Naive thymus-derived CD4-positive, alpha-beta T cell (primary cell): ENCODE measurements at regions of chr12 and their contacts with region 1.

Region 1: DNA sequence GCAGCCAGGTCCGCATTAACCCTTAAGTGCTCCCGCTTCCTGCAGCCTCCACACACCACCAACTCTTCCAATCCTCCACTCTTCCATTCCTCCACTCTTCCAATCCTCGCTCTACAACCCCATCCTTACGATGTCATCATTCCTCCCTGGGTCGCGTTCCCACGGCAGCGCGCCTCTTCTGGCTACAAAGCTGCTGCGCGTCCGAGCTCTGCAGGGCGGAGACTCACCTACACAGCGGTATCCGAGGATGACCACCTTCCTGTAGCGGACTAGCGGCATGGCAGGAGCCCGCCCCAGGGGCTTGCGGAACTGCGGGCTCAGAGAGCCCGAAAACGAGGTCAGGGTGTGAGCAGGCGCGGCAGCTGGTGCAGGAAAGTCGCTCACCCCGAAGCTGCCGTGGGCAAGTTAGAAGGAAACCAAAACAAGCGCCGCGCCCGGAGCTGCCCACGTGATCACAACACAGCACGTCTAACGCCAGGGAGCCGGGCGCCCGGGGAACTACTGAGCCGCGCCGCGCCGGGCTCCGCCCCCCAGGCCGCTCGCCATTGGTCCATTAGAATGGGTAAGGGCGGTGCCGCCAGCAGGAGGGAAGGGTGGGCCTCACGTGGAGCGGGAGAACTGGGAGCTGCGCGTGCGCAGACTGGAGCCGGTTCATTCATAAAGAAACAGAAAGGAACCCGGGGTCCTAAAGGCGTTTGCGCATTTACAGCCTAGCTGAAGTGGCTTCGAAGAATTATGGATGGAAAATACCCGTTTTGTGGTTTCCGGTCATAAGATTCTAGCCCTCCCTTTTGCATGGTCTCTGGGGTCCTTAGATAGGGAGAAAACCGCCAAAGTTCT is at the start of gene RHEBL1:
- DNase-seq: peak; percentile 93 to 99 (median 96)
- ATAC-seq: peak; percentile 100
- H3K4me3 ChIP-seq: peak within 1 kb of the TSS; percentile 99
- H3K4me3 Mint-ChIP-seq: peak within 1 kb of the TSS; percentile 86 to 99 (median 96)
- H3K27ac ChIP-seq: peak within 1 kb of the TSS; percentile 74
- H3K27ac Mint-ChIP-seq: peak within 1 kb of the TSS; percentile 77 to 92 (median 86)
- H3K4me1 ChIP-seq: peaks cover 5 to 13% of the 10 kb centered on the region in 2 donors
- H3K4me1 Mint-ChIP-seq: peaks cover 14 to 31% (median 18%) of the 10 kb centered on the region in 7 donors
- H3K27me3 ChIP-seq: no peaks in the 10 kb centered on the region
- H3K27me3 Mint-ChIP-seq: no peaks in the 10 kb centered on the region
- total RNA-seq, gene RHEBL1: 1.8 to 9.4 (median 3.3) TPM

Region 2: DNA sequence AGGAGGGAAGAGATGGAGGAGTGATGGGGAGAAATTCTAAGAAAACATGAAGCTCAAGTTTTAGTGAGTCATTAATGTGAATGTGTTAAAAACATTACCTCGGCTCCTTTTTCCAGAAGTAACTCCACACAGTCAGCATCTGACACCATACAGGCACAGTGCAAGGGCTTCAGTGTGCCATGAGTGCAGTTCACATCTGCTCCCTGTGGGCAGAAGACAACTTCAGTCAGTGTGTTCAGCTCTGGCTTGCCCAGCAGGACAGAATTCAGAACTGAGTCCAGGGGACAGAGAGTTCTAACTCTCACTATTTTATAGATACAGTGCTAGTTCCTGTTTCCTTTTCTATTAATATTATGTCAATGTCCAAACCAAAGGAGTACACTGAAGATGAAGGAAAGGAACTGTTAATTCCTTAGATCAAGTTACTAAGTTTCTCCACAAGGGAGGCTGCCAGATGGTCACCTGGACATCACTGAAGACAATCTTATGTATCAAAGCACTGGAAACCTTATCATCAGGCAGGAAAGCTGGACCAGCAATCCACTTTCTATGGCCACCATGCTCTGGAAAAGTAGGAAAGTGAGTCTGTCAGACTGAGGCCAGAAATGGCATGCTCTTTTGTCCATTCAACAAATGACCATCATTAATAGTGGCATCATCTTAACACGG is 918.5 kb before region 1 on chr12:
- CTCF ChIA-PET with region 1: no interaction called
- POLR2A ChIA-PET with region 1: no interaction called
- intact Hi-C with region 1: no loop called
- DNase-seq: no peak
- ATAC-seq: no peak
- H3K4me3 ChIP-seq: no peak overlapping the region
- H3K4me3 Mint-ChIP-seq: no peak overlapping the region
- H3K27ac ChIP-seq: peak overlapping the region; percentile 27
- H3K27ac Mint-ChIP-seq: peak overlapping the region in 3 of 9 donors; percentile 14 to 82 (median 28)
- H3K4me1 ChIP-seq: peaks cover 0 to 3% of the 10 kb centered on the region in 2 donors
- H3K4me1 Mint-ChIP-seq: peaks cover 16 to 26% (median 19%) of the 10 kb centered on the region in 7 donors
- H3K27me3 ChIP-seq: no peaks in the 10 kb centered on the region
- H3K27me3 Mint-ChIP-seq: no peaks in the 10 kb centered on the region

Region 3: GRCh38 chr12:48716493-48717251 is 353.1 kb before region 1 on chr12 and contains the start of gene CCNT1:
- CTCF ChIA-PET with region 1: no interaction called
- POLR2A ChIA-PET with region 1: no interaction called
- intact Hi-C with region 1: loop called in 1 of 2 experiments (anchors 5 kb)
- DNase-seq: peak; percentile 90 to 100 (median 99)
- ATAC-seq: peak; percentile 93
- H3K4me3 ChIP-seq: peak within 1 kb of the TSS; percentile 88
- H3K4me3 Mint-ChIP-seq: peak within 1 kb of the TSS; percentile 89 to 98 (median 94)
- H3K27ac ChIP-seq: peak within 1 kb of the TSS; percentile 95
- H3K27ac Mint-ChIP-seq: peak within 1 kb of the TSS; percentile 95 to 99 (median 98)
- H3K4me1 ChIP-seq: peaks cover 14 to 24% of the 10 kb centered on the region in 2 donors
- H3K4me1 Mint-ChIP-seq: peaks cover 21 to 50% (median 37%) of the 10 kb centered on the region in 7 donors
- H3K27me3 ChIP-seq: no peaks in the 10 kb centered on the region
- H3K27me3 Mint-ChIP-seq: peaks cover 0 to 4% (median 0%) of the 10 kb centered on the region in 5 donors
- total RNA-seq, gene CCNT1: 62.5 to 127 (median 76.6) TPM

Region 4: GRCh38 chr12:48977315-48978281 is 92.1 kb before region 1 on chr12:
- CTCF ChIA-PET with region 1: no interaction called
- POLR2A ChIA-PET with region 1: no interaction called
- intact Hi-C with region 1: no loop called
- DNase-seq: peak; percentile 52 to 90 (median 75)
- ATAC-seq: peak; percentile 77
- H3K4me3 ChIP-seq: no peak overlapping the region
- H3K4me3 Mint-ChIP-seq: peak overlapping the region; percentile 24 to 85 (median 56)
- H3K27ac ChIP-seq: no peak overlapping the region
- H3K27ac Mint-ChIP-seq: peak overlapping the region in 7 of 9 donors; percentile 26 to 81 (median 61)
- H3K4me1 ChIP-seq: peaks cover 37% of the 10 kb centered on the region in 2 donors
- H3K4me1 Mint-ChIP-seq: peaks cover 28 to 53% (median 47%) of the 10 kb centered on the region in 7 donors
- H3K27me3 ChIP-seq: peaks cover 3 to 11% of the 10 kb centered on the region in 2 donors
- H3K27me3 Mint-ChIP-seq: peaks cover 18 to 92% (median 40%) of the 10 kb centered on the region in 5 donors

Region 5: GRCh38 chr12:49037111-49037946 is 32.4 kb before region 1 on chr12:
- CTCF ChIA-PET with region 1: no interaction called
- POLR2A ChIA-PET with region 1: no interaction called
- intact Hi-C with region 1: no loop called
- DNase-seq: no peak
- ATAC-seq: no peak
- H3K4me3 ChIP-seq: no peak overlapping the region
- H3K4me3 Mint-ChIP-seq: no peak overlapping the region
- H3K27ac ChIP-seq: no peak overlapping the region
- H3K27ac Mint-ChIP-seq: peak overlapping the region in 2 of 9 donors; percentile 22 to 53
- H3K4me1 ChIP-seq: no peaks in the 10 kb centered on the region
- H3K4me1 Mint-ChIP-seq: peaks cover 0 to 4% (median 0%) of the 10 kb centered on the region in 7 donors
- H3K27me3 ChIP-seq: no peaks in the 10 kb centered on the region
- H3K27me3 Mint-ChIP-seq: no peaks in the 10 kb centered on the region

Region 6: DNA sequence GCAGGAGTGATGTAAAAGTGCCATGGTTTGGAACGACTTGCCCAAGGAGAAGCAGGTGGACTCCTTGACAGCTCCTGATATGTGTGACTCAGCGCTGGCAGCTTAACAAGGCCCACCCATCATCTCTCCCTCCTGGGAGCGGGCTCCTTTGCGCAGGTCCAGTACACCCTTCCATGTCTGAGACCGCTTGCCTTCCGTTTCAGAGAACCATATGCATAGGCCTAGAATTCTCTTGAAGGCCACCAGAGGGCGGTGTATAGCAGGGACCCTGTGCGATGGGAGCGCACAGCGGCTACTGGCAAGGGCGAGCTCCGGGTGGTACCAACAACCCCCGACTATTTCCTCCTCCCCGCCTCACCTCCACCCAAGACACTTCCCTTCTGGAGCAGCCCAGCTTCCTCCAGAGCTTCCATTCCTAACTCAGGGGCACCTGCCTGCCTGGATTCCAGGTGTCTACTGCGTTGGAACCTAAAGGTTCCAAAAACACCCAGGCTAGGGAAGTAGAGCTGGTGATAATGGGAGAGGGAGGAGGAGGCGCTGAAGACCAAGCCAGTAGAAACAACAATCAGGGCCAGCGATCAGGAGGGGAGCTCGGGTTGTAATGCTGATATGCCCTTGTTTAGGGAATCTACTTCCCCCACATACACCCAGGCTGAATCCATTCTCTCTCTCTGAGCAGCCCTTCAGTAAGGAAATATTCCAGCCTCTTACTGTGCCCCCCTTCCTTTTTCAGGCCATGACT is 18.6 kb after region 1 on chr12:
- CTCF ChIA-PET with region 1: interaction called, 55 read pairs
- POLR2A ChIA-PET with region 1: interaction called, 9 read pairs
- intact Hi-C with region 1: loop called (anchors 1 kb)
- DNase-seq: peak; percentile 39 to 73 (median 70)
- ATAC-seq: peak; percentile 94
- H3K4me3 ChIP-seq: no peak overlapping the region
- H3K4me3 Mint-ChIP-seq: peak overlapping the region in 7 of 10 donors; percentile 11 to 59 (median 48)
- H3K27ac ChIP-seq: no peak overlapping the region
- H3K27ac Mint-ChIP-seq: peak overlapping the region in 2 of 9 donors; percentile 5 to 34
- H3K4me1 ChIP-seq: peaks cover 35 to 40% of the 10 kb centered on the region in 2 donors
- H3K4me1 Mint-ChIP-seq: peaks cover 22 to 53% (median 38%) of the 10 kb centered on the region in 7 donors
- H3K27me3 ChIP-seq: peaks cover 14 to 37% of the 10 kb centered on the region in 2 donors
- H3K27me3 Mint-ChIP-seq: peaks cover 32 to 58% (median 49%) of the 10 kb centered on the region in 5 donors

Region 7: DNA sequence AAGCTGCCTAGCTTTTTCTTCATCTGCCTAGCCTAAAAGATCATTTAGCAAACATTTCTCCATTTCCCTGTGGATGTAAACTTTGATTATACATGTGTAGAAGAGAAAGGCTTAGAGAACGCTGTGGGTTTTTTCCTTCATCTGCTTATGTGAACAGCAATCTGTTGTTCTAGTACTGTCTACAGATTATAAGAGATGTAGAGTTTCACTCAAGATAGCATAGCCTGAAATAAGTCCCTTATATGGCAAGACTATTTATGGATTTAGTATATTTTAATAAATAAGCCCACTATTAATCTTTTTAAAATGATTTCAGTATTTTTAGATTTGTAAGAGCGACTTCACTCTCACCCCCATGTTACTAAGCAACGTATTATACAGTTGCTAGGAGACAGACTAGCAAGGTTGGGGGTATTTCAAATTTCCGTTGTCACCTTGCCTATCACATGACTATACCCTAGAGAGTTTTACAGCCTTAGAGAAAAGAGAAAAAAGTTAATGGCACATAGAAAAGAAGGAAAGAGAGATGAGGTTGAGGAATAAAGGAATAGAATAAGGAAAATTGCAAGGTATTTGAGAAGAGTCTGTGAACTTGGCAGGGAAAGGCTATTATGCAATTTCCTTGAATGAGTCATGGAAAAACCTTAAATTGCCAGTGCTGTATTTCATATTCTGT is 131.3 kb after region 1 on chr12:
- CTCF ChIA-PET with region 1: no interaction called
- POLR2A ChIA-PET with region 1: no interaction called
- intact Hi-C with region 1: no loop called
- DNase-seq: peak in 6 of 9 donors; percentile 30 to 64 (median 46)
- ATAC-seq: peak; percentile 92
- H3K4me3 ChIP-seq: no peak overlapping the region
- H3K4me3 Mint-ChIP-seq: no peak overlapping the region
- H3K27ac ChIP-seq: no peak overlapping the region
- H3K27ac Mint-ChIP-seq: peak overlapping the region in 4 of 9 donors; percentile 4 to 75 (median 22)
- H3K4me1 ChIP-seq: peaks cover 0 to 6% of the 10 kb centered on the region in 2 donors
- H3K4me1 Mint-ChIP-seq: peaks cover 7 to 15% (median 14%) of the 10 kb centered on the region in 7 donors
- H3K27me3 ChIP-seq: no peaks in the 10 kb centered on the region
- H3K27me3 Mint-ChIP-seq: peaks cover 0 to 19% (median 0%) of the 10 kb centered on the region in 5 donors

Region 8: DNA sequence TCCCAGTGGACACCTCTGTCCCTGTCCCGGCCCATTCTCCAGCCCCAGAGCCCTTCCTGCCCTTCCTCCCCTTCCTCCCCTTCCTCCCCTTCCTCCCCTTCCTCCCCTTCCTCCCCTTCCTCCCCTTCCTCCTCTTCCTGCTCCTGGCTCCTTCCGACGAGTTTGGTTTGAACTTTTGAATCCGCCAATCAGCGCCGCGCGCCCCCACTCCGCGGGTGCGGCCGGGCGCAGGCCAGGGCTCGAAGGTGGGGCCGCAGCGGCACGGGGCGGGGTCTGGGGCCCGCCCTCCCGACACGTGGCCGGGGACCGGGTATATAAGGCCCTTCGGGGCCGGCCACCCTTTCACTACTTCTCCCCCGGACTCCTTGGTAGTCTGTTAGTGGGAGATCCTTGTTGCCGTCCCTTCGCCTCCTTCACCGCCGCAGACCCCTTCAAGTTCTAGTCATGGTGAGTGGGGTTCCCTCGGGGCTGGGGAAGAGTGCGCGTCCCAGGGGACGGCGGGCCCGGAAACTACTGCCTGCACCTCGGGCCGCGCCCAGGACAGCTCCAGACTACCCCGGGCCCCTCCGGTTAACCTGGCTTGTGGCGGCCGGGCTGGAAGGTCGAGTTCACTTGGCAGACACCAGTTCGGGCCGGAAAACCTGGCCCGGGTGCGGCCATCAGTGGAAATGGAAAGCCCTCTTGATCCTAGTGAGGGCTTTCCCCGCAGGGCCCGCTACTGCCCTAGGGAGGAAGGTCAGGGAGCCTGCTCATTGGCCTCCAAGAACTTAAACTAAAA is 195.2 kb after region 1 on chr12 and contains the start of gene TUBA1C:
- CTCF ChIA-PET with region 1: no interaction called
- POLR2A ChIA-PET with region 1: no interaction called
- intact Hi-C with region 1: loop called in 1 of 2 experiments (anchors 10 kb)
- DNase-seq: peak; percentile 67 to 98 (median 72)
- ATAC-seq: peak; percentile 93
- H3K4me3 ChIP-seq: peak within 1 kb of the TSS; percentile 91
- H3K4me3 Mint-ChIP-seq: peak within 1 kb of the TSS; percentile 88 to 99 (median 92)
- H3K27ac ChIP-seq: peak within 1 kb of the TSS; percentile 68
- H3K27ac Mint-ChIP-seq: peak within 1 kb of the TSS; percentile 65 to 99 (median 89)
- H3K4me1 ChIP-seq: peaks cover 16% of the 10 kb centered on the region in 2 donors
- H3K4me1 Mint-ChIP-seq: peaks cover 4 to 51% (median 11%) of the 10 kb centered on the region in 7 donors
- H3K27me3 ChIP-seq: no peaks in the 10 kb centered on the region
- H3K27me3 Mint-ChIP-seq: peaks cover 0 to 2% (median 0%) of the 10 kb centered on the region in 5 donors
- total RNA-seq, gene TUBA1C: 17.9 to 195 (median 24.1) TPM

Region 9: DNA sequence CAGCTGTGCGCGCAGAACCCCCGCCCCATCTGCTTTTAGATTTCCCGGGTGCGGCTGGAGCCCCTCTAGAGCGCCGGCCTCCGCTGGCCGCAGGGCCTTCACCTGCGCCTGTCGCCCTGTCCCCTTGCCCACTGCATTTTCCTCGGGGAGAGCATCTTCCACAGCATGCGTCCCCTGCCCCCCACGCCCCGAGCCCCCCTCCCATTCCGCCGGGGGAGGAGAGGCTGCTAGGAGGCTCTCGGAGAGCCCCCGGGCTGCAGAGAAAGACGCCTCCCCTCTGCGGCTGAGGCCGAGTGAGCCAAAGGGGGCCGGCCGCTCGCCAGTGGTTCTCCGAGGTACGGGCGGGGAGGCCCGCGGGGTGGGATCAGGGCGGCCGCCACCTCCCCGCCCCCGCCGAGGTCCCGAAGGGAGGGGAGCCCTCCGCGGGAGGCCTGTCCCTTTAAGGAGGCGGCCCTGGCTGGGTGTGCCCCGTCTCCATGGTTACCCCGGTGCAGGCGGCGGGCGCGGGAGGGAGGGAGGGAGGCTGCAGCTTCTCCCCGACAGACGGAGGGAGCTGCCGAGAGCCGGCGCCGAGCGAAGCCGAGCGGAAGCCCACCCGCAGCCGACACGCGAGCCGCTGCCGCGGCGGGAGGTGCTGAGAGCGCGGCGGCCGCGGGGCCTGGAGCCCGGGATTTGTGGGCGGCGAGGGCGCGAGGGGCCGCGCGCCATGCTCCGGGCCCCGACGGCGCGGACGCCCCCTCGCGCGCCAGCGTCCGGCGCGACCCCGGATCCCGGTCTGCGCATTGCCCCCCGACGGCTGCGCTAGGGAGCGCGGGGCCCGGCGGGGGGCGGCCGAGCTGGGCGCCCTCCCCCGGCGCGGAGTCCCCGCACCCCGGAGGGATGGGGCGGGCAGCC is 469.0 kb after region 1 on chr12 and contains the start of gene KCNH3:
- CTCF ChIA-PET with region 1: no interaction called
- POLR2A ChIA-PET with region 1: no interaction called
- intact Hi-C with region 1: loop called in 1 of 2 experiments (anchors 1 kb)
- DNase-seq: peak; percentile 66 to 95 (median 86)
- ATAC-seq: peak; percentile 94
- H3K4me3 ChIP-seq: peak within 1 kb of the TSS; percentile 69
- H3K4me3 Mint-ChIP-seq: peak within 1 kb of the TSS; percentile 66 to 87 (median 80)
- H3K27ac ChIP-seq: peak within 1 kb of the TSS; percentile 11
- H3K27ac Mint-ChIP-seq: peak within 1 kb of the TSS in 6 of 9 donors; percentile 43 to 81 (median 64)
- H3K4me1 ChIP-seq: peaks cover 14 to 15% of the 10 kb centered on the region in 2 donors
- H3K4me1 Mint-ChIP-seq: peaks cover 13 to 37% (median 27%) of the 10 kb centered on the region in 7 donors
- H3K27me3 ChIP-seq: no peaks in the 10 kb centered on the region
- H3K27me3 Mint-ChIP-seq: peaks cover 0 to 66% (median 6%) of the 10 kb centered on the region in 5 donors
- total RNA-seq, gene KCNH3: 0.99 to 5.3 (median 3.8) TPM